ENCODE measurements at regions of chr6 and their contacts with region 1.

Region 1: DNA sequence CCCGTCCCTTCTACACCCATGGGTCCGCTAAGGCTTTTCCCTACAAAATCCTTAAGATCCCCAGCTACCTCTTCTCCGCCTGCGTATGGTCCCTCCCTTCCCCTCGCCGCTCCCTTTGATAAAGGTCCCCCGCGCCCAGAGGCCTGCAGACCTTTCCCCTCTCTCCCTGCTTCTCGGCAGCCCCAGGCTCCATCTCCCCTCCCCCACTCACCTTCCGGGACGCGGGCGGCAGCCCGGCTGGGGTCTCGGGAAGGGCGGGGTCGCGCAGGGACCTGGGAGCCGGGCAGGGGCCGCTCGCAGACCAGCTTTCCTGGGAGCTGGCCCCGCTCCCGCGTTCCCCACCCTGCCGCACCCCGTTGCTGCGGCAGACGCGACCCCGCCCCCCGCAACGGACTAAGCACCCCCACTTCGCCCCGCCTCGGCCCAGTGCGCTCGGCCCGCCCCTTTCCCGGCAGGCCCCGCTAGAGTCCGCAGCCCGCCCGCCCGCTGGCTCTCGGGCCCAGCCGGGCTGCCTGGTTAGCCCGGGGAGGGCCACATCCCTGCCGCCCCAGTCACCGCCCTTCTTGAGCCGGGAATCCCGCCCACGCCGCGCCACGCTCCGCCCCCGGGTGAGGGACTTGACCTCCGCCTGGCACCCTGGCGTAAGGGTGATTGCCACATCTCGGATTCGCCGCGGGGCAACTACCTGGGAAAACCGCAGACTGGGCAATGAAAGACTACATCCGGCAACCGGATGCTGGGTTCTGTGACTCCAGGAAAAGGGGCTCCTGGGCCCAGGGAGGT is at the start of gene FLOT1:
- DNase-seq: peak; percentile 92 to 94 (median 94)
- H3K4me3 ChIP-seq: peak within 1 kb of the TSS; percentile 60
- H3K27ac ChIP-seq: peak within 1 kb of the TSS; percentile 72 to 89
- H3K4me1 ChIP-seq: peaks cover 9% of the 10 kb centered on the region
- H3K27me3 ChIP-seq: no peaks in the 10 kb centered on the region
- CTCF ChIP-seq: no peak
- EP300 ChIP-seq: no peak
- POLR2A ChIP-seq: peak; percentile 55
- total RNA-seq, gene FLOT1: 64.1 to 154 (median 116) TPM

Region 2: GRCh38 chr6:30775104-30775503 is 32.6 kb after region 1 on chr6:
- intact Hi-C with region 1: loop called in 2 of 4 experiments (anchors 5 kb)
- DNase-seq: no peak
- H3K4me3 ChIP-seq: no peak overlapping the region
- H3K27ac ChIP-seq: no peak overlapping the region
- H3K4me1 ChIP-seq: peaks cover 12% of the 10 kb centered on the region
- H3K27me3 ChIP-seq: no peaks in the 10 kb centered on the region
- CTCF ChIP-seq: no peak
- EP300 ChIP-seq: no peak
- POLR2A ChIP-seq: no peak

Region 3: GRCh38 chr6:30781743-30782424 is 39.4 kb after region 1 on chr6:
- intact Hi-C with region 1: loop called in 2 of 4 experiments (anchors 5 kb)
- DNase-seq: peak; percentile 99 to 100 (median 99)
- H3K4me3 ChIP-seq: no peak overlapping the region
- H3K27ac ChIP-seq: peak overlapping the region; percentile 31 to 96
- H3K4me1 ChIP-seq: peaks cover 20% of the 10 kb centered on the region
- H3K27me3 ChIP-seq: no peaks in the 10 kb centered on the region
- CTCF ChIP-seq: no peak
- EP300 ChIP-seq: peak; percentile 96
- POLR2A ChIP-seq: no peak

Region 4: GRCh38 chr6:30814136-30815040 is 71.9 kb after region 1 on chr6:
- intact Hi-C with region 1: loop called in 1 of 4 experiments (anchors 5 kb)
- DNase-seq: peak in 1 of 5 donors; percentile 33
- H3K4me3 ChIP-seq: no peak overlapping the region
- H3K27ac ChIP-seq: no peak overlapping the region
- H3K4me1 ChIP-seq: peaks cover 7% of the 10 kb centered on the region
- H3K27me3 ChIP-seq: no peaks in the 10 kb centered on the region
- CTCF ChIP-seq: no peak
- EP300 ChIP-seq: no peak
- POLR2A ChIP-seq: no peak

Region 5: DNA sequence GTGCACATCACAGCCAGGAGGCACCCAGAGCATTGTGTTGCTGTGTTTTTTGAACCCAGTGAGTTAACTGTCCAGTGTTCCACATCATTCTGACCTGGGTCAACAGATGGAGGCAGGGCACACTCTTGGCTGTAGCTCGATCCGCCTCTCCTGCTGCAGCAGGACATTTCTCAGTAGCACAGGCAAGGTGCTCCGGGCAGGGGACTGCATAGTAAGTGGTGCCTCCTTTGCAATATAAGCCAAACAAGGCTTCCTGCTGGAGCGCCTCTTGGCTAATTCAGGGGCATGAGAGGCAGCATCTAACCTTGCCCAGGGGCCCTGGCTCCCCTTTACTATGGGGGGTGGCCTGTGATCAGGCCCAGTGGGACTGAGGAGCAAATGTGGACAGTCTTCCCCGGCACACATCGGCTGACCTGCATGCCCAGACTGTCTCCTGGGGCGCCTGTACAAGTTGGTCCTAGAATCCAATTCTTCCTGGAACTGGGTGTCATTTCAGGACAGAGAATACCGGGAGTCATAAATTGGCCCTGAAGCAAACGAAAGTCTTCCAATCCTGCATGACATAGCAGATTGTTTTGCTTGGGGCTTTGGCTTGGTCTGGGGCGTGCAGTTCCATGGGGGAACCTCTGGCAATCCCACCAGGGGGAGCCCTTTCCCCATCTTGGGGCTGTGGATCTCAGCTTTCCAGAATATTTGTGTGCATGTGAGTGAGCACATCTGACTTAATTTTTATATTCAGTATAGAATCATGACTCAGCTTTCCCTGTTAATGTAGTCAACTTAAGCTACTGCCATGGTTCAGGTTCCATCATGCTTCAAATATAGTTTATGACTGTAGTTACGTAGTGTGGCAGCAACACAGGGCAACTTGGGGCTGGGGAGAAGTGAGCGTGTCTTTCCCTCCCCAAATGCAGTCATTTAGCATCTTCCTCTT is 85.8 kb after region 1 on chr6:
- intact Hi-C with region 1: loop called in 2 of 4 experiments (anchors 10 kb)
- DNase-seq: peak; percentile 86 to 94 (median 92)
- H3K4me3 ChIP-seq: no peak overlapping the region
- H3K27ac ChIP-seq: peak overlapping the region in 1 of 2 donors; percentile 56
- H3K4me1 ChIP-seq: peaks cover 3% of the 10 kb centered on the region
- H3K27me3 ChIP-seq: no peaks in the 10 kb centered on the region
- CTCF ChIP-seq: peak; percentile 80 to 97 (median 90)
- EP300 ChIP-seq: no peak
- POLR2A ChIP-seq: no peak

Region 6: GRCh38 chr6:30857549-30857948 is 115.0 kb after region 1 on chr6:
- intact Hi-C with region 1: no loop called
- DNase-seq: no peak
- H3K4me3 ChIP-seq: no peak overlapping the region
- H3K27ac ChIP-seq: no peak overlapping the region
- H3K4me1 ChIP-seq: peaks cover 10% of the 10 kb centered on the region
- H3K27me3 ChIP-seq: no peaks in the 10 kb centered on the region
- CTCF ChIP-seq: no peak
- EP300 ChIP-seq: no peak
- POLR2A ChIP-seq: no peak

Region 7: DNA sequence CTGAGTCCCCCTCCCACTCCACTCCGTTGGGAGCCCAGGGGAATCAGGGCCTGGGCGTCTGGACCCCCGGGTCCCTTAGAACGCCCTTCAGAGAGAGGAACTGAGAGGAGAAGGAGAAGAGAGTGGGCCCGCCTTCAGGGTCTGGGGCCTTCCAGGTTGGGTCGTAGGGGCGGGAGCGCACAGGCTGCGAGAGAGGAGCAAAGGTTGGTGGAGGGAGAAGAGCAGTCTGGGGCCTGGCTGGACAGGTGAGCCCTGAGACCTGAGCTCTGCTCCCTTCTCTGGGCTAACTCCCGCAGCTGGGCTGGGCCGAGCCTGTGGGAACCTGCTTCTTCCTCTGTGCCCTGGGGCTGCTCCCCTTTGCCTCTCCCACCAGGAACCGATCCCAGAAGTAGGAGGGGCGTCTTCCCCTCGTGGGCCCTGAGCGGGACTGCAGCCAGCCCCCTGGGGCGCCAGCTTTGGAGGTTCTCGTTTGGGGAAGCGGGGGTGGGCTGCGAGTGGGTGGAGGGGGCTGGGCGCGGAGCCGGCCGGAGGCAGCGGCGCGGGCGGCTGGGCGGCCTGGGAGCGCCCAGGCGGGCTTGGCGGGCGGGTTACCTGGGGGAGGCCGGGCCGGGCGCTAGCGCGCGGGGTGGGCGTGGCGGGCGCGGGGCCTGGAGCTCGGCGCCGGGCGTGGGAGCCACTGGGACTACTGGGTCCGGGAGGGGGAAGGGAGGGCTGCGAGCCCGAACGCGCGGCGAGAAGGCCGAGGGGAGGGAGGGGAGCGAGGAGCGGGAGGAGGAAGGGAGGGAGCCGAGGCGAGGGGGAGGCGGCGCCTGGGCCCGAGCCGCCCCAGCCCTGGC is 141.4 kb after region 1 on chr6 and contains the start of gene DDR1:
- intact Hi-C with region 1: loop called (anchors 5 to 10 kb)
- DNase-seq: peak; percentile 89 to 94 (median 92)
- H3K4me3 ChIP-seq: peak within 1 kb of the TSS; percentile 82
- H3K27ac ChIP-seq: peak within 1 kb of the TSS; percentile 87 to 97
- H3K4me1 ChIP-seq: peaks cover 16% of the 10 kb centered on the region
- H3K27me3 ChIP-seq: no peaks in the 10 kb centered on the region
- CTCF ChIP-seq: no peak
- EP300 ChIP-seq: no peak
- POLR2A ChIP-seq: peak; percentile 29
- total RNA-seq, gene DDR1: 20.1 to 116 (median 83.7) TPM

Region 8: DNA sequence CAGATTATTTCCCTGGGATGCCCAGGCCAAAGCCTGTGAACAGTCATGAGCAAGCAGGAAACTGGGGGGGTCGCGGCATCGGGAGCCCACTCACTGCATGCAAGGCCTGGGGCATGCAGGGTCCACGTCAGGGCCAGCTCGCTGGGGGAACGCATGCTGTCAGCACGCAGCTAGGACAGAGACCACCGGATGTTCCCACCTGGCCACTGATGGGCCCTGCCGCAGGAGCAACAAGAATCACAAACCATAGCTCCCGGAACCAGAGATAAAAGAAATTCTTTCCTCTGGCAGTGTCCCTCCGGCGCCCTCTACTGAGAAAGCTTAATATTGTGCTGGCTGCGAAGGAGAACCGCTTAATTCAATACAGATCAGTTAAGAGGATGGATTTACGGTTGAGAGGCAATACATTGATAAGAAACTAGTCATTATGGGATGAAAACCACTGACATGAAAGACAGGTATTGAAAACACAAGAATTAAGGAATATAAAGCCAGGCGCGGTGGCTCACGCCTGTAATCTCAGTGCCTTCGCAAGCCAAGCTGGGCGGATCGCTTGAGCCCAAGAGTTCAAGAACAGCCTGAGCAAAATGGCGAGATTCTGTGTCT is 337.3 kb after region 1 on chr6:
- intact Hi-C with region 1: loop called in 1 of 4 experiments (anchors 10 kb)
- DNase-seq: peak; percentile 52 to 75 (median 67)
- H3K4me3 ChIP-seq: no peak overlapping the region
- H3K27ac ChIP-seq: no peak overlapping the region
- H3K4me1 ChIP-seq: peaks cover 3% of the 10 kb centered on the region
- H3K27me3 ChIP-seq: no peaks in the 10 kb centered on the region
- CTCF ChIP-seq: peak; percentile 68 to 79 (median 71)
- EP300 ChIP-seq: no peak
- POLR2A ChIP-seq: no peak

Measured in ovary (tissue), 10 donors.